SK-N-SH (cell line): ENCODE measurements at regions of chr2 and their contacts with region 1.

Region 1: DNA sequence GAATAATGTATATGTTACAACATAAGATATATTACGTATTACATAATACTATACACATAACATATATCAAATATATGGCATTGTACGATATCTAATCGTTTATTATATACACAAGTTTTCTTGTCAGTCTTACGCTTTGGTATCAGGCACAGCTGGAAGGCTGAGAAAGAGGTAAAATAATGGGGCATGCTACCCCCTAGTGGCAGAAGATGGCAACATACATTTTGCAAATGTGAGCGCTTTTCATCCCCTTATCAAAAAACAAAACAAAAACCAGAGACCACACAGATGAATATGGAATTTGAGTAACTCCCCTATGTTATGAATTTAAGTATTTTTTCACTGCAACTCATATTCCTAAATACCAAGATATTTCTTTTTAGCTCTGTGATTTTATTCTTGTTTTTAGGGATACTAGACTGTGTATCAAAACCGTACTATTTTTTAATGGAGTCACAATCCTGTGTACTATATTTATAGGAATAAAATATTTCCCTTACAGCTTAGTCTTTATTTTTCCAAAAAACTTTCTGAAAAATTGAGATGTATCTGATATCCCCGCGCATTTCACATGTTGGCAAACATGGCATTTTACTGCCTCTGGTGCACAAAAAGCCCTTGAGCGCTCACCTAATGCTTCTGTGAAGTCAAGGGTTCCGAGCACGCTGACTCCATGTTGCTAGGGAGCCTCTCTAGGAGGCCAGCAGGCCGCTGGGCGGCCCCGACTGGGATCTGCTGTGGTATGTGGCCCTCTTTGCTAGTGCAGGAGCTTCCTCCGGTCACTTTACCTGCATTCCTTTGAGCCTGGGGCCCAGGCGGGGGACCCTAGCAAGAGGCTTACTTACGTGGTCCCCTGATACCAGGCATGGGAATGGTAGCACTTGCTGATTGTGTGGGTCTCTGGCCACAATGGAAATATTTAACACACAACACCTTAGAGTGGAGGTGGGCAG is 62.5 kb downstream of the SLC4A3 start:
- DNase-seq: peak; percentile 60
- H3K4me3 ChIP-seq: no peak overlapping the region
- H3K27ac ChIP-seq: no peak overlapping the region
- H3K4me1 ChIP-seq: peaks cover 2 to 7% of the 10 kb centered on the region in 2 experiments; a peak in 2 of 4 replicates
- H3K27me3 ChIP-seq: peaks cover 15% of the 10 kb centered on the region; the same call in 1 of the 2 replicates
- CTCF ChIP-seq: peak; percentile 79
- EP300 ChIP-seq: no peak
- RAD21 ChIP-seq: peak; percentile 80

Region 2: GRCh38 chr2:219560037-219560892 is 129.7 kb before region 1 on chr2:
- CTCF ChIA-PET with region 1: interaction called, 15 read pairs
- POLR2A ChIA-PET with region 1: no interaction called
- DNase-seq: peak; percentile 90
- H3K4me3 ChIP-seq: no peak overlapping the region
- H3K27ac ChIP-seq: no peak overlapping the region
- H3K4me1 ChIP-seq: peaks cover 0 to 10% of the 10 kb centered on the region in 2 experiments; a peak in 1 of 4 replicates
- H3K27me3 ChIP-seq: no peaks in the 10 kb centered on the region
- CTCF ChIP-seq: peak; percentile 70
- EP300 ChIP-seq: no peak
- RAD21 ChIP-seq: no peak

Region 3: DNA sequence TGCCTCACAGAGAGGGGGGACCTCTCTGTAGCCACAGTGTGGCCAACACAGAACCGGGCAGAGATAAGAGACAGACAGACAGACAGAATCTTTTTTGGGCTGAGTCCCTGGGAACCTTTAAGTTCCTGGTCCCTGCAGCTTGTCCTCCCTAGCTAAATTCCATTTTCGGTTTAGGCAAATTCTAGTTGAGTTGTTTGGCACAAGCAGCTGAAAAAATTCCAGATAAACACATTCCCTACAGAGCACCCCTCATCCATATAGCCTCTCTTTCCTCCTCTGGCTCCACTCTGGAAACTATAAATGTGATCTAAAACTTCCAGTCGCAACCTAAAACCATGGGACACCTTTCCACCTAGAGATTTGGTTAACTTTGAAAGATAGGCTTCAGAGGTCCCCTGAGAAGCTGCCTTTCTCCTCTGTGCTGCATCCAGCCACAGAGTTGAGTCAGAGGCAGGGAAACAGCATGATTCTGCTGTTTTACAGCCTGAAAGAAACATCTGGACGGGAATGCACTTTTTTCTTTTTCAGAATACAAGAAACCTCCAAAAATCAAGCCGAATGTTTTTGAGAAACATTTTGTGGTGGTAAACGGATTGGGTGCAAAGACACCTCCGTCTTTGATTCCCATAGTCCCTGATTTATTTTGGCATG is 31.6 kb before region 1 on chr2:
- CTCF ChIA-PET with region 1: interaction called, 11 read pairs
- POLR2A ChIA-PET with region 1: no interaction called
- DNase-seq: no peak
- H3K4me3 ChIP-seq: no peak overlapping the region
- H3K27ac ChIP-seq: no peak overlapping the region
- H3K4me1 ChIP-seq: no peaks in the 10 kb centered on the region
- H3K27me3 ChIP-seq: peaks cover 15% of the 10 kb centered on the region; the same call in 1 of the 2 replicates
- CTCF ChIP-seq: no peak
- EP300 ChIP-seq: no peak
- RAD21 ChIP-seq: no peak

Region 4: DNA sequence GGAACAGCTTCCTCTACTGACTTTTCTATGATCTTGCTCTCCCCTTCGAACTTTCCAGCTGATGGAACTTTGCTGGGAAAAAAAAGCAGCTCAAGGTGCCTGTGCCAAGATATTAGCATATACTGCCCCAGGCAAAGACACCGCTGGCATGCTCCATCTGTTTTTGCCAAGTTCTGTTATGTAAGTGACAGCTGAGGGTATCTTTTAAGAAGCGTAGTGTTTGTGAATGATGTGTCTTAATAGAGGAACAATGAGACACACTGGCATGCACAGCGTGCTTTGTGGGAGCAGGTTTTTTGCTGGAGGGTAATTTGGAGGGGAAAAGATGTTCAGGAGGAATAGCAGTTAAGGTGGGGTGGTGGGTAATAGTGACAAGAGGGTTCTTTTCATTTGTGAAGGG is 14.7 kb before region 1 on chr2:
- CTCF ChIA-PET with region 1: interaction called, 16 read pairs
- POLR2A ChIA-PET with region 1: no interaction called
- DNase-seq: no peak
- H3K4me3 ChIP-seq: no peak overlapping the region
- H3K27ac ChIP-seq: no peak overlapping the region
- H3K4me1 ChIP-seq: no peaks in the 10 kb centered on the region
- H3K27me3 ChIP-seq: peaks cover 46% of the 10 kb centered on the region
- CTCF ChIP-seq: no peak
- EP300 ChIP-seq: no peak
- RAD21 ChIP-seq: no peak

Region 5: GRCh38 chr2:219701847-219702634 is 12.1 kb after region 1 on chr2:
- CTCF ChIA-PET with region 1: interaction called, 47 read pairs
- POLR2A ChIA-PET with region 1: no interaction called
- DNase-seq: no peak
- H3K4me3 ChIP-seq: no peak overlapping the region
- H3K27ac ChIP-seq: no peak overlapping the region
- H3K4me1 ChIP-seq: no peaks in the 10 kb centered on the region
- H3K27me3 ChIP-seq: peaks cover 37% of the 10 kb centered on the region
- CTCF ChIP-seq: no peak
- EP300 ChIP-seq: no peak
- RAD21 ChIP-seq: no peak